AG04449 (cell line): ENCODE measurements at regions of chr16 and their contacts with region 1.

Region 1: GRCh38 chr16:68264128-68265077 is at the start of gene SLC7A6:
- DNase-seq: no peak
- H3K4me3 ChIP-seq: peak within 1 kb of the TSS; percentile 98
- CTCF ChIP-seq: peak; percentile 82

Region 2: GRCh38 chr16:68237243-68238028 is 27.0 kb before region 1 on chr16:
- CTCF ChIA-PET with region 1: interaction called, 23 read pairs
- POLR2A ChIA-PET with region 1: interaction called, 13 read pairs
- DNase-seq: peak; percentile 80
- H3K4me3 ChIP-seq: peak overlapping the region; percentile 62
- CTCF ChIP-seq: no peak

Region 3: GRCh38 chr16:68251832-68252231 is 12.6 kb before region 1 on chr16:
- CTCF ChIA-PET with region 1: interaction called, 70 read pairs
- POLR2A ChIA-PET with region 1: interaction called, 17 read pairs
- DNase-seq: no peak
- H3K4me3 ChIP-seq: no peak overlapping the region
- CTCF ChIP-seq: no peak

Region 4: GRCh38 chr16:68289621-68290329 is 25.4 kb after region 1 on chr16:
- CTCF ChIA-PET with region 1: interaction called, 44 read pairs
- POLR2A ChIA-PET with region 1: interaction called, 6 read pairs
- DNase-seq: no peak
- H3K4me3 ChIP-seq: no peak overlapping the region
- CTCF ChIP-seq: no peak

Region 5: GRCh38 chr16:68310761-68311511 is 46.5 kb after region 1 on chr16 and contains the starts of genes PRMT7 and SLC7A6OS:
- CTCF ChIA-PET with region 1: interaction called, 34 read pairs
- POLR2A ChIA-PET with region 1: interaction called, 16 read pairs
- DNase-seq: no peak
- H3K4me3 ChIP-seq: peak within 1 kb of the TSS; percentile 96
- CTCF ChIP-seq: no peak

Region 6: GRCh38 chr16:68338326-68339119 is 74.1 kb after region 1 on chr16:
- CTCF ChIA-PET with region 1: interaction called, 374 read pairs
- POLR2A ChIA-PET with region 1: no interaction called
- DNase-seq: no peak
- H3K4me3 ChIP-seq: no peak overlapping the region
- CTCF ChIP-seq: no peak